ENCODE measurements at regions of chr13 and their contacts with region 1.

Region 1: GRCh38 chr13:32310134-32310706 is 4.9 kb downstream of the ZAR1L start:
- DNase-seq: peak; percentile 32
- ATAC-seq: peak; percentile 70
- H3K4me3 Mint-ChIP-seq: no peak overlapping the region
- H3K27ac Mint-ChIP-seq: no peak overlapping the region
- H3K4me1 Mint-ChIP-seq: peaks cover 17% of the 10 kb centered on the region
- H3K27me3 Mint-ChIP-seq: no peaks in the 10 kb centered on the region

Region 2: DNA sequence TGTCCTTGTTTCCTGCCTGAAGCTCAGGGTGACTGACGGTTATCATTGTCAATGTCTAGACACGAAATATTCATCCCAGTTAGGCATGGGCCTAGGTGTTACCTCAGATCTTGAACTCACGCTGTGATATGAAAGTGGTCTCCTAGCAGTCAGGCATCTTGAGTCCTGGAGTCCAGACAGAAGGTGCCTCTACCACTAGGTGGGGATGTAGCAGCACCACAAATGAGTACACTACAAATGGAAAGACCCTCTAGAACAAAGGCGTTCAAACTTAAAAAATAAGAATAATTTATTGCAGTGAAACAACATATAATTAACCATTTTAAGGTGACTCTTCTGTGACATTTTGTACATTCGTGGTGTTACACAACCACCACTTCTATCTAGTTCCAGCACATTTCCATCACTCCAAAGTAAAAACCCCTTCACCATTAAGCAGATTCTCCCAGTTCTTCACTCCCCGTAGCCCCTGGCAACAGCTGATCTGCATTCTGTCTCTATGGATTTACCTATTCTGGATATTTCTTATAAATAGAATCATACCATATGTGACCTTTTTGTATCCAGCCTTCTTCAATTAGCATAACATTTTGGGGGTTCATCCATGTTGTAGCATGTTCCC is 290.5 kb before region 1 on chr13:
- CTCF ChIA-PET with region 1: no interaction called
- POLR2A ChIA-PET with region 1: no interaction called
- intact Hi-C with region 1: loop called (anchors 1 to 5 kb)
- DNase-seq: peak; percentile 51
- ATAC-seq: peak; percentile 72
- H3K4me3 Mint-ChIP-seq: no peak overlapping the region
- H3K27ac Mint-ChIP-seq: no peak overlapping the region
- H3K4me1 Mint-ChIP-seq: no peaks in the 10 kb centered on the region
- H3K27me3 Mint-ChIP-seq: no peaks in the 10 kb centered on the region

Region 3: GRCh38 chr13:32164622-32165268 is 145.5 kb before region 1 on chr13:
- CTCF ChIA-PET with region 1: interaction called, 3 read pairs
- POLR2A ChIA-PET with region 1: interaction called, 4 read pairs
- intact Hi-C with region 1: loop called (anchors 5 to 10 kb)
- DNase-seq: peak; percentile 37
- ATAC-seq: peak; percentile 87
- H3K4me3 Mint-ChIP-seq: no peak overlapping the region
- H3K27ac Mint-ChIP-seq: no peak overlapping the region
- H3K4me1 Mint-ChIP-seq: no peaks in the 10 kb centered on the region
- H3K27me3 Mint-ChIP-seq: no peaks in the 10 kb centered on the region

Region 4: DNA sequence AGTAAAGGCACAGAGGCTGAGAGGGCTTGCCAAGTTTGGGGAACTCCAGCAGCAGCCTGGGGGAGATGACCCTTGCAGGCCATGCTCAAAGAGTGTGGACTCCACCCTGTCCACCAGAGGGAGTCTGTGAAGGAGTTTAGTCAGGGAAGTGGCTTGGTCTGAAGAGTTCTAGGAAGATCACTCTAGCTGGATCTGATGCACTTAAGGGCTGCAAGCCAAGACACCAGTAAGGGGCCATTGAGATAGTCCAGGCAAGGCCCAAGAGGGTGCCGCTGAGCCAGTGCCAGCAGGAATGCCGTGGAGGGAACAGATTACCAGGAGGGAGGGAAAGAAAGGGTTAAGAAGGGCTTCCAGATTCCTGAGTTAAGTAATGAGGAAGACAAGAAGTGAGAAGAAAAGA is 63.8 kb before region 1 on chr13:
- CTCF ChIA-PET with region 1: interaction called, 14 read pairs
- POLR2A ChIA-PET with region 1: interaction called, 3 read pairs
- intact Hi-C with region 1: loop called (anchors 1 kb)
- DNase-seq: peak; percentile 67
- ATAC-seq: peak; percentile 86
- H3K4me3 Mint-ChIP-seq: no peak overlapping the region
- H3K27ac Mint-ChIP-seq: no peak overlapping the region
- H3K4me1 Mint-ChIP-seq: no peaks in the 10 kb centered on the region
- H3K27me3 Mint-ChIP-seq: no peaks in the 10 kb centered on the region

Region 5: GRCh38 chr13:32267836-32268439 is 42.3 kb before region 1 on chr13:
- CTCF ChIA-PET with region 1: interaction called, 7 read pairs
- POLR2A ChIA-PET with region 1: no interaction called
- intact Hi-C with region 1: loop called (anchors 1 kb)
- DNase-seq: peak; percentile 76
- ATAC-seq: peak; percentile 63
- H3K4me3 Mint-ChIP-seq: no peak overlapping the region
- H3K27ac Mint-ChIP-seq: no peak overlapping the region
- H3K4me1 Mint-ChIP-seq: peaks cover 9% of the 10 kb centered on the region
- H3K27me3 Mint-ChIP-seq: no peaks in the 10 kb centered on the region

Region 6: DNA sequence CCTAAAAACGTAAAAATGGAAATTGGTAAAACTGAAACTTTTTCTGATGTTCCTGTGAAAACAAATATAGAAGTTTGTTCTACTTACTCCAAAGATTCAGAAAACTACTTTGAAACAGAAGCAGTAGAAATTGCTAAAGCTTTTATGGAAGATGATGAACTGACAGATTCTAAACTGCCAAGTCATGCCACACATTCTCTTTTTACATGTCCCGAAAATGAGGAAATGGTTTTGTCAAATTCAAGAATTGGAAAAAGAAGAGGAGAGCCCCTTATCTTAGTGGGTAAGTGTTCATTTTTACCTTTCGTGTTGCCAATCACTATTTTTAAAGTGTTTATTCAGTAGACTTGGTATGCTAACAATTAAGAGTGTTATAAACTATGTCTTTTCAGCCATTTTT is 30.7 kb after region 1 on chr13:
- CTCF ChIA-PET with region 1: no interaction called
- POLR2A ChIA-PET with region 1: no interaction called
- intact Hi-C with region 1: no loop called
- DNase-seq: no peak
- ATAC-seq: no peak
- H3K4me3 Mint-ChIP-seq: no peak overlapping the region
- H3K27ac Mint-ChIP-seq: no peak overlapping the region
- H3K4me1 Mint-ChIP-seq: no peaks in the 10 kb centered on the region
- H3K27me3 Mint-ChIP-seq: no peaks in the 10 kb centered on the region

Measured in activated CD4-positive, alpha-beta T cell treated with anti-CD3 and anti-CD28 coated beads for 36 hours (primary cell).